ENCODE measurements at regions of chr6 and their contacts with region 1.

Region 1: DNA sequence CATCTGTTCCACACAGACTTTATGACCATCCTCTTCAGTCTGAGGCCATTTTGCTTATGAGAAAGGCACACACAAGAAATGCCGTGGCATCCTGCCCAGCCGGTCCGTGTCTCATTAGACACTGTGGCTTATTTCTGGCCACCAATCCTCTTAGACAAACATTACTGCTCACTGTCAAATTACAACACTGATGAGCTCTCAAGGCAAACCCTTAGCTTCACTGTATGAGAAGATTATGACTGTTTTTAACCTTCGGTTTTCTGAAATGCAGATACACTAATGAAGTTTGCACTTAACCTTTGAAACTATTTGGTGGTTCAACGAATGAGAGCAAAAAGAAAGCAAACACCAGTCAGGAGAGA is 50.5 kb upstream of the DST start:
- DNase-seq: no peak
- H3K4me3 ChIP-seq: no peak overlapping the region
- H3K27ac ChIP-seq: no peak overlapping the region
- H3K4me1 ChIP-seq: no peaks in the 10 kb centered on the region
- CTCF ChIP-seq: no peak

Region 2: GRCh38 chr6:56148488-56149186 is 544.6 kb before region 1 on chr6:
- CTCF ChIA-PET with region 1: no interaction called
- POLR2A ChIA-PET with region 1: no interaction called
- intact Hi-C with region 1: no loop called
- DNase-seq: no peak
- H3K4me3 ChIP-seq: no peak overlapping the region
- H3K27ac ChIP-seq: no peak overlapping the region
- H3K4me1 ChIP-seq: no peaks in the 10 kb centered on the region
- CTCF ChIP-seq: no peak

Region 3: DNA sequence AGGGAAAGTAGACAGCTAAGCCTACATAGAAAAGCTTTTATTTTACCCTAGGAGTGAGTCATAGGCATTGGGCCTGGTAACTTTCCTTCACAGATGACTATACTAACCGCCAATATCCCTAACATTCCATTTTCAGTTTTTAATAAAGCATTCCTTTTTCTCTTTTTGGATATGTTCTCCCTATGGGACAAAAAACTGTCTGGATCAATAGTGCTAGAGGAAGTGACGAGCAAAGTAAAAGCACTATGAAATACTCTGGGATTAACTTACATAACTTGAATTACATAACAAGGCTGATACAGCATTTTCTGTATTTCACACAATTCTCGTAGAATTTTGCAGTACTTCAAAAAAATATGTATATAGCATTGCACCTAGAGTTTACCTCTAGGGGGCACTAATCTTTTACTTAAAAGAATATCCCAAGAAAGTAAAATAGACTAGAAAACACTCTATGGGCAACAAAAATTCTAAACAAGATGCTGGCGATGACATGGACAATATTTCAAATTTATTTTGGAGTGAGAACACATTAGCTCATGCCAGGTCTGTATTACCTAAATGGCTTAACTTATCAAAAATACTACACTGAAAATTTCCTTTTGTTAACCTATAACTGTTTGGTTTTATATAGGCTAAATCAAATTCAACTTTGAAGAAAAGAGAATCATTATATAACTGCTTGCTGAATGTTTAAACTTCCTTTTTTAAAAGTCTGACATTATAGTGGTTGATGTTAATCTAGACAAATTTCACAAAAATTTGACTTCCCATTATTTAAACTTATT is 15.8 kb after region 1 on chr6:
- CTCF ChIA-PET with region 1: no interaction called
- POLR2A ChIA-PET with region 1: interaction called, 11 read pairs
- intact Hi-C with region 1: no loop called
- DNase-seq: peak; percentile 54
- H3K4me3 ChIP-seq: no peak overlapping the region
- H3K27ac ChIP-seq: no peak overlapping the region
- H3K4me1 ChIP-seq: no peaks in the 10 kb centered on the region
- CTCF ChIP-seq: peak; percentile 86

Measured in OCI-LY7 (cell line).